AG04449 (cell line): ENCODE measurements at regions of chr6 and their contacts with region 1.

Region 1: GRCh38 chr6:151014404-151015100 is 149.1 kb downstream of the MTHFD1L start:
- DNase-seq: no peak
- H3K4me3 ChIP-seq: no peak overlapping the region; the same call in 1 of the 2 replicates
- CTCF ChIP-seq: peak; percentile 79

Region 2: DNA sequence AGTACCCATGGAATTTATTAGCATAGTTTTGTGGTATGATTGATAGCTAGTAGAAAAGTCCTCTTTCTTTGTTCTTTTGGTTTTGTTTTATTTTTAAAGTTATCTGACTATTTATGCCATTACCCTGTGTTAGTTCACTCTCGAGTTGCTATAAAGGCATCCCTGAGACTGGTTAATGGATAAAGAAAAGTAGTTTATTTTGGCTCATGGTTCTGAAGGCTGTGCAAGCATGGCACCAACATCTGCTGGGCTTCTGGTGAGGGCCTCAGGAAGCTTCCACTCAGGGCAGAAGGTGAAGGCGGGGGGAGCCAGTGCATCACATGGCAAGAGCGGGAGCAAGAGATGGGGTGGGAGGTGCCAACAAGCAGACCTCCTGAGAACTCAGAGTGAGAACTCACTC is 17.5 kb after region 1 on chr6:
- CTCF ChIA-PET with region 1: interaction called, 52 read pairs
- POLR2A ChIA-PET with region 1: no interaction called
- DNase-seq: no peak
- H3K4me3 ChIP-seq: no peak overlapping the region
- CTCF ChIP-seq: no peak

Region 3: GRCh38 chr6:151060096-151060765 is 45.7 kb after region 1 on chr6:
- CTCF ChIA-PET with region 1: interaction called, 18 read pairs
- POLR2A ChIA-PET with region 1: no interaction called
- DNase-seq: peak; percentile 80
- H3K4me3 ChIP-seq: no peak overlapping the region
- CTCF ChIP-seq: no peak

Region 4: DNA sequence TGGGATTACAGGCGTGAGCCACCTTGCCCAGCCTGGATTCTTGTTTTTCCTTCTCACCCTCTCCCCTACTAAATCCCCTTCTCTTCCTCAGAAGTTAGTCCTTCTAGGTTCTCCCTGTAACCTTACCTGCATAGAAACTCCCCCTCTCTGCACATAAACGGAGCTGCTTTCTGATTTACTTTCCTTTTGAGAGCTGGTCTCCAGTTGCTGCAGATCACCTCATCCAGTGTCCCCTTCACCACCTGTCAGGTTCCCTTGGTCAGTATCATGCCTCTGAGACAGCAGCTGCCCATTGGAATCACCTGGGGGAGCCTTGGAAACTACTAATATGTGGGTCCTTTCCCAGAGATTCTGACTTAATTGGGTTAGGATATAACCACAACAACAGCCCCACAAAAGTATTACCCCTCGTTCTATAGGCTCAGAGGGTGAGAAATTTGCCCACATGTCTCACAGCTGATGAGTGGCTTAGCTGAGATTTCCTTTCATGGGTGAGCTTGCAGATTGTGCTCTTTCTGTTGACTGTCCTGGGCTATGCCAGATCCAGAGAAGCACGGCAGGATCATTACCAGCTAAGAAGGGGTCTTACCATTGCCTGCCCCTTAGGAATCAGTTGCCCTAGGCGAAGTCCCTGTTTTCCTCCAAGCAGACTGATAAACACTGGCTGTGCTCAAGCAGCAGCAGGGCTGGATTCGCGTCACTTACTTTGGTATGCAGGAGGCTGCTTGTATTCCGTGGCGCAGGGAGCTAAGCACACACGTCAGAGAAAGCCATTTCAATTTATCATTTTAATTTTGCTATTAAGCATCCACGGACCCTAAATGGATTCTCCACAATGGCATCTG is 276.5 kb after region 1 on chr6:
- CTCF ChIA-PET with region 1: interaction called, 20 read pairs
- POLR2A ChIA-PET with region 1: no interaction called
- DNase-seq: peak; percentile 92
- H3K4me3 ChIP-seq: peak overlapping the region; percentile 2; the same call in 1 of the 2 replicates
- CTCF ChIP-seq: no peak